Sigmoid colon (tissue), 7 donors: ENCODE measurements at regions of chr14 and their contacts with region 1.

Region 1: GRCh38 chr14:103653805-103654204 is 24.8 kb downstream of the KLC1 start:
- DNase-seq: no peak
- H3K4me3 ChIP-seq: no peak overlapping the region
- H3K27ac ChIP-seq: peak overlapping the region; percentile 6 to 65 (median 58)
- H3K4me1 ChIP-seq: peaks cover 0 to 80% (median 69%) of the 10 kb centered on the region in 4 donors
- H3K27me3 ChIP-seq: no peaks in the 10 kb centered on the region
- CTCF ChIP-seq: no peak
- EP300 ChIP-seq: no peak
- POLR2A ChIP-seq: no peak

Region 2: DNA sequence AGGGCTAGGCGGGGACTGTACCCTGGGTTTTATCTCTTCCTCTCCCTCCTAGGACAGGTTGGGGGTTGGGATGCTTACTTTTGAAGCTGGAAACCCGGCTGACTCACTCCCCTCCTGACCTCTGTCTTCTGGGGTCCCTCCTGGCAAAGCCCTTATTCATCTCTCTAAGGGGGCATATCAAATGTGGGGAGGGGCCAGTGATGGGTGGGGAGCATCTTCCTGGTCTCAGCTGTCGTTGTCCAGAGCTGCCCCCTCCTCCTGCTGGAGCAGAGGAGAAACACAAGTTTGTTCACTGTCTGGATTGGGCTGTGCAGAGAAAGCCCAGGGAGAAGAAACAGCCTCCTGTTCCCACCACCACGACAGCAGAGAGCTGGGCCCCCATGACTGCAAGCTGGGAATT is 444.8 kb before region 1 on chr14:
- intact Hi-C with region 1: no loop called
- DNase-seq: no peak
- H3K4me3 ChIP-seq: no peak overlapping the region
- H3K27ac ChIP-seq: peak overlapping the region; percentile 25 to 84 (median 78)
- H3K4me1 ChIP-seq: peaks cover 0 to 14% (median 13%) of the 10 kb centered on the region in 4 donors
- H3K27me3 ChIP-seq: peaks cover 0 to 21% (median 0%) of the 10 kb centered on the region in 3 donors
- CTCF ChIP-seq: no peak
- EP300 ChIP-seq: no peak
- POLR2A ChIP-seq: no peak

Region 3: GRCh38 chr14:103676881-103677675 is 23.3 kb after region 1 on chr14:
- intact Hi-C with region 1: loop called (anchors 1 kb)
- DNase-seq: no peak
- H3K4me3 ChIP-seq: no peak overlapping the region
- H3K27ac ChIP-seq: no peak overlapping the region
- H3K4me1 ChIP-seq: peaks cover 0 to 13% (median 2%) of the 10 kb centered on the region in 4 donors
- H3K27me3 ChIP-seq: no peaks in the 10 kb centered on the region
- CTCF ChIP-seq: no peak
- EP300 ChIP-seq: no peak
- POLR2A ChIP-seq: no peak